IMR-90 (cell line): ENCODE measurements at regions of chrX and their contacts with region 1.

Region 1: GRCh38 chrX:70852303-70852702 is 56.2 kb downstream of the TEX11 start:
- DNase-seq: no peak
- ATAC-seq: no peak
- H3K4me3 ChIP-seq: no peak overlapping the region
- H3K27ac ChIP-seq: no peak overlapping the region
- H3K4me1 ChIP-seq: no peaks in the 10 kb centered on the region
- H3K27me3 ChIP-seq: peaks cover 2% of the 10 kb centered on the region; the same call in 1 of the 2 replicates
- CTCF ChIP-seq: no peak
- POLR2A ChIP-seq: no peak
- RAD21 ChIP-seq: no peak

Region 2: DNA sequence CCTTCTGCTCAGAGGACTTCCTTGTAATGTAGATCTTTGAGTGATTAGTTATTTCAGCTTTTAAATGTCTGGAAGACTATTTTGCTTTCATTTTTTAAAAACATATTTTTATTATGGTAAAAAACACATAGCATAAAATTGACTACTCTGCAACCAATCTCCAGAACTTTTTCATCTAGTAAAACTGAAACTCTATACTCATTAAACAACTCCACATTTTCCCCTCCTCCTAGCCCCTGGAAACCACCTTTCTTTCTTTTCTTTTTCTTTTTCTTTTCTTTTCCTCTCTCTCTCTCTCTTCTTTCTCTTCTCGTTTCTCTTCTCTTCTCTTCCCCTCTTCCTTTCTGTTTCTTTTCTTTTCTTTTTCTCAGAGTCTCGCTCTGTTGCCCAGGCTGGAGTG is 177.0 kb before region 1 on chrX:
- CTCF ChIA-PET with region 1: no interaction called
- POLR2A ChIA-PET with region 1: no interaction called
- dilution Hi-C with region 1: no loop called
- in situ Hi-C with region 1: no loop called
- intact Hi-C with region 1: no loop called
- DNase-seq: no peak
- ATAC-seq: no peak
- H3K4me3 ChIP-seq: no peak overlapping the region
- H3K27ac ChIP-seq: no peak overlapping the region
- H3K4me1 ChIP-seq: no peaks in the 10 kb centered on the region
- H3K27me3 ChIP-seq: no peaks in the 10 kb centered on the region; the same call in 1 of the 2 replicates
- CTCF ChIP-seq: no peak
- POLR2A ChIP-seq: no peak
- RAD21 ChIP-seq: no peak

Region 3: GRCh38 chrX:70916754-70917153 is 64.5 kb after region 1 on chrX:
- CTCF ChIA-PET with region 1: no interaction called
- POLR2A ChIA-PET with region 1: no interaction called
- dilution Hi-C with region 1: no loop called
- in situ Hi-C with region 1: no loop called
- intact Hi-C with region 1: loop called (anchors 10 kb)
- DNase-seq: no peak
- ATAC-seq: no peak
- H3K4me3 ChIP-seq: no peak overlapping the region
- H3K27ac ChIP-seq: no peak overlapping the region
- H3K4me1 ChIP-seq: no peaks in the 10 kb centered on the region
- H3K27me3 ChIP-seq: no peaks in the 10 kb centered on the region
- CTCF ChIP-seq: no peak
- POLR2A ChIP-seq: no peak
- RAD21 ChIP-seq: no peak

Region 4: DNA sequence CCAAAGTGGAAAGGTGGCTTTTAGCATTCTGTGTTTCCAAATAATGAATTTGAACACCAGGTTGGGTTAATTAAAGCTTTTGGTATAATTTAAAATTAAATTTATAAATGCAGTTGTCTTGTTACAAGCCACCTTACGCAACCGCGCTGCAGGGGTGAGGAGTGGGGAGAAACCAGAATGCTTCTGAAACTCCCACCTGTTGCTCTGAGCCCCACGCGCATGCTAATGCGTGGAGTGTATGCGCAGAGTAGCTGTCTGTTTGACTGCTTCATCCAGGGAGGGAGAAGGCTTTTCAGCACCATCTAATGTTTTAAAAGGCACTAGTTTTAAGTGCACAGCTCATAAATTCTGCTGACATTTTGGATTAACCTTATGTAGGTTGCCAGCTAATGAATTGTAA is 693.1 kb after region 1 on chrX:
- CTCF ChIA-PET with region 1: no interaction called
- POLR2A ChIA-PET with region 1: no interaction called
- dilution Hi-C with region 1: no loop called
- in situ Hi-C with region 1: no loop called
- intact Hi-C with region 1: no loop called
- DNase-seq: no peak
- ATAC-seq: no peak
- H3K4me3 ChIP-seq: no peak overlapping the region
- H3K27ac ChIP-seq: no peak overlapping the region
- H3K4me1 ChIP-seq: no peaks in the 10 kb centered on the region; the same call in none of the 2 replicates
- H3K27me3 ChIP-seq: no peaks in the 10 kb centered on the region
- CTCF ChIP-seq: no peak
- POLR2A ChIP-seq: no peak
- RAD21 ChIP-seq: no peak